Activated CD8-positive, alpha-beta memory T cell treated with anti-CD3 and anti-CD28 coated beads, Interleukin-2, amount 10 ng/mL, durations not matched to agents 7 days and 5 days (primary cell): ENCODE measurements at regions of chr11 and their contacts with region 1.

Region 1: GRCh38 chr11:61446211-61446651 is 16.3 kb downstream of the SDHAF2 start:
- DNase-seq: peak; percentile 87
- ATAC-seq: peak; percentile 88
- H3K4me3 Mint-ChIP-seq: no peak overlapping the region
- H3K27ac Mint-ChIP-seq: no peak overlapping the region
- H3K4me1 Mint-ChIP-seq: peaks cover 16% of the 10 kb centered on the region
- H3K27me3 Mint-ChIP-seq: no peaks in the 10 kb centered on the region

Region 2: GRCh38 chr11:61111786-61112517 is 334.3 kb before region 1 on chr11:
- CTCF ChIA-PET with region 1: no interaction called
- DNase-seq: peak; percentile 91
- ATAC-seq: peak; percentile 95
- H3K4me3 Mint-ChIP-seq: peak overlapping the region; percentile 62
- H3K27ac Mint-ChIP-seq: peak overlapping the region; percentile 79
- H3K4me1 Mint-ChIP-seq: peaks cover 88% of the 10 kb centered on the region
- H3K27me3 Mint-ChIP-seq: no peaks in the 10 kb centered on the region

Region 3: GRCh38 chr11:61460474-61460881 is 14.2 kb after region 1 on chr11:
- CTCF ChIA-PET with region 1: interaction called, 18 read pairs
- DNase-seq: no peak
- ATAC-seq: no peak
- H3K4me3 Mint-ChIP-seq: no peak overlapping the region
- H3K27ac Mint-ChIP-seq: no peak overlapping the region
- H3K4me1 Mint-ChIP-seq: no peaks in the 10 kb centered on the region
- H3K27me3 Mint-ChIP-seq: no peaks in the 10 kb centered on the region

Region 4: DNA sequence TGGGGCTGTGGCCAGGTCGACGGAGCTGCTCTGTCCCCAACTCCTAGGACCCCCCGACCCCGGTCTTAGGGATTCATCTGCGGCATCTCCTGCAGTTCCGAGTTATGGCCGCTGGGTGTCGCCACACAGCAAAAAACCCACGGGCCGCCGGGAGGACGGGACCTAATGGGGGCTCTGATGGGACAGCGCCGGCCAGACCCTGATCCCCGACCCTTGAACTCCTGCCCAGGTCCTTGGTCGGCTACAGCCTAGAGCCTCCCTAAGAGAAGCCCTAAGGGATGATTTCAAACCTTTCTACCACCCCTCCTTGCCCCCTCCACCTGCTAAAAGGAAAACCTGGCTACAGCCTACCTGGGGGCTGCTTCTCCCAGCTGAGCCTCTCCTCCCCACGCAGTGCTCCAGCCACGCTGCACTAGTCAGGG is 31.5 kb after region 1 on chr11:
- CTCF ChIA-PET with region 1: interaction called, 24 read pairs
- DNase-seq: peak; percentile 61
- ATAC-seq: peak; percentile 37
- H3K4me3 Mint-ChIP-seq: no peak overlapping the region
- H3K27ac Mint-ChIP-seq: no peak overlapping the region
- H3K4me1 Mint-ChIP-seq: peaks cover 2% of the 10 kb centered on the region
- H3K27me3 Mint-ChIP-seq: no peaks in the 10 kb centered on the region

Region 5: DNA sequence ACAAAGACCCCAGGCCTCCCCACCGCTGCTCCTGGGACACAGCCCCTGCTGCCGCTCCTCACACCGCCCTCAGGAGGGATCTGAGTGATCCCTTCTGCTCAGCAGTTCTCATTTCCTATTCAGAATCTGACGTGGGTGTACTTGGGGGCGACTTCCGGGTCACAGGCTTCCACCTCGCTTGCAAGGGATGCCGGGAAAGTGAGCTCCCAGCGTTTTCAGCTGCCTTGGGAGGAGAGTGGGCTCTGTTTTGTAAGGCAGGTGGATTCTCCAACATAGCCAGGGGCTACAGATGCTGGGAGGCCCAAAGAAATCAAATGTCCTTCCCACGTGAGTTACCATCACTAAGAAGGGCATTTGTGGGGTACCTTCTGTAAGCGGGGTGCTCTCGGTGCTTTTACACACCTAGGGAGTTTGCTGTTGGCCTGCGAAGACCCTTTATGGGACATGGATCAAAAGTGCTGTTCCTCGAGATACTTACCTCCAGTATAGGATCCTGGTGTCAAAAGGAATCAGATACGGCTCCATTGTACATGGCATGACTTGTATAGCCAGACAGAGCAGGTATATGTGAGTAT is 52.6 kb after region 1 on chr11:
- CTCF ChIA-PET with region 1: no interaction called
- DNase-seq: no peak
- ATAC-seq: no peak
- H3K4me3 Mint-ChIP-seq: no peak overlapping the region
- H3K27ac Mint-ChIP-seq: no peak overlapping the region
- H3K4me1 Mint-ChIP-seq: peaks cover 5% of the 10 kb centered on the region
- H3K27me3 Mint-ChIP-seq: no peaks in the 10 kb centered on the region

Region 6: GRCh38 chr11:61532139-61533038 is 86.2 kb after region 1 on chr11:
- CTCF ChIA-PET with region 1: interaction called, 10 read pairs
- DNase-seq: peak; percentile 49
- ATAC-seq: peak; percentile 73
- H3K4me3 Mint-ChIP-seq: no peak overlapping the region
- H3K27ac Mint-ChIP-seq: no peak overlapping the region
- H3K4me1 Mint-ChIP-seq: no peaks in the 10 kb centered on the region
- H3K27me3 Mint-ChIP-seq: peaks cover 4% of the 10 kb centered on the region